CD8-positive, alpha-beta T cell (primary cell): ENCODE measurements at regions of chr4 and their contacts with region 1.

Region 1: DNA sequence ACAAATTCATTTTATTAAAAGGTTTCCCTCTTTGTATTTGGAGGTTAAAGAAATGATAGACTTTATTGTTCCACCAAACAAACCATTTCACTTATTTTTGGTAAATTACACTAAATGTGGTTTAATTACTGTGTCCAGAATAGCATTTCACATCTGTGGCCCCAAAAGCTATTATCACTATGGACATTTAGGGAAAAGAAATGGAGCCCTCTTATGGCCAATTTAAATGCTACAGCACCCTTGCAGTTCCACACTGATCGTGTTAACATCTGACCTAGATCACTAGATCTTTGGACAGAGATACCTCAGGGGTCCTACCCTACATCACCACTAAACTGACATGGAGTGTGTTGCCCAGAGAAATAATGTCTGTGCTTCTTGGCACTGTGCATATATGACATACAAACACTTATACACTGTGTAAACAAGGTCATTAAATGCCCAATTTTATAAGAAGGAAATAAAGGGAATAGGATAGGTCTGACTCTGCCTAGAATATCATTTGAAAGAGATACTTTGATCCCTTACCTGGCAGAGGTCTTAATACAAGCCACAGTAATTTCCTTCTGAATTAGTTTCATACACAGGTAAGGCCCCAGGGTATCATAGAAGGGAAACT is 163.9 kb downstream of the KDR start:
- DNase-seq: peak in 2 of 9 experiments; percentile 13 to 46
- ATAC-seq: peak; percentile 37
- H3K4me3 ChIP-seq: no peak overlapping the region
- H3K4me3 Mint-ChIP-seq: no peak overlapping the region
- H3K27ac ChIP-seq: no peak overlapping the region
- H3K27ac Mint-ChIP-seq: no peak overlapping the region
- H3K4me1 ChIP-seq: peaks cover 15% of the 10 kb centered on the region
- H3K4me1 Mint-ChIP-seq: peaks cover 24% of the 10 kb centered on the region
- H3K27me3 ChIP-seq: no peaks in the 10 kb centered on the region
- H3K27me3 Mint-ChIP-seq: no peaks in the 10 kb centered on the region
- CTCF ChIP-seq: peak; percentile 59

Region 2: GRCh38 chr4:54322818-54323417 is 638.5 kb before region 1 on chr4:
- CTCF ChIA-PET with region 1: interaction called, 4 read pairs
- POLR2A ChIA-PET with region 1: no interaction called
- intact Hi-C with region 1: loop called in 1 of 2 experiments (anchors 2 kb)
- DNase-seq: peak in 7 of 9 experiments; percentile 3 to 58 (median 42)
- ATAC-seq: peak; percentile 40
- H3K4me3 ChIP-seq: no peak overlapping the region
- H3K4me3 Mint-ChIP-seq: no peak overlapping the region
- H3K27ac ChIP-seq: no peak overlapping the region
- H3K27ac Mint-ChIP-seq: no peak overlapping the region
- H3K4me1 ChIP-seq: no peaks in the 10 kb centered on the region
- H3K4me1 Mint-ChIP-seq: no peaks in the 10 kb centered on the region
- H3K27me3 ChIP-seq: no peaks in the 10 kb centered on the region
- H3K27me3 Mint-ChIP-seq: no peaks in the 10 kb centered on the region
- CTCF ChIP-seq: peak; percentile 39

Region 3: GRCh38 chr4:54384563-54384962 is 576.9 kb before region 1 on chr4:
- CTCF ChIA-PET with region 1: interaction called, 3 read pairs
- POLR2A ChIA-PET with region 1: no interaction called
- intact Hi-C with region 1: loop called in 1 of 2 experiments (anchors 5 kb)
- DNase-seq: peak in 2 of 9 experiments; percentile 11 to 20
- ATAC-seq: no peak
- H3K4me3 ChIP-seq: no peak overlapping the region
- H3K4me3 Mint-ChIP-seq: no peak overlapping the region
- H3K27ac ChIP-seq: no peak overlapping the region
- H3K27ac Mint-ChIP-seq: no peak overlapping the region
- H3K4me1 ChIP-seq: no peaks in the 10 kb centered on the region
- H3K4me1 Mint-ChIP-seq: no peaks in the 10 kb centered on the region
- H3K27me3 ChIP-seq: no peaks in the 10 kb centered on the region
- H3K27me3 Mint-ChIP-seq: peaks cover 4% of the 10 kb centered on the region
- CTCF ChIP-seq: no peak

Region 4: DNA sequence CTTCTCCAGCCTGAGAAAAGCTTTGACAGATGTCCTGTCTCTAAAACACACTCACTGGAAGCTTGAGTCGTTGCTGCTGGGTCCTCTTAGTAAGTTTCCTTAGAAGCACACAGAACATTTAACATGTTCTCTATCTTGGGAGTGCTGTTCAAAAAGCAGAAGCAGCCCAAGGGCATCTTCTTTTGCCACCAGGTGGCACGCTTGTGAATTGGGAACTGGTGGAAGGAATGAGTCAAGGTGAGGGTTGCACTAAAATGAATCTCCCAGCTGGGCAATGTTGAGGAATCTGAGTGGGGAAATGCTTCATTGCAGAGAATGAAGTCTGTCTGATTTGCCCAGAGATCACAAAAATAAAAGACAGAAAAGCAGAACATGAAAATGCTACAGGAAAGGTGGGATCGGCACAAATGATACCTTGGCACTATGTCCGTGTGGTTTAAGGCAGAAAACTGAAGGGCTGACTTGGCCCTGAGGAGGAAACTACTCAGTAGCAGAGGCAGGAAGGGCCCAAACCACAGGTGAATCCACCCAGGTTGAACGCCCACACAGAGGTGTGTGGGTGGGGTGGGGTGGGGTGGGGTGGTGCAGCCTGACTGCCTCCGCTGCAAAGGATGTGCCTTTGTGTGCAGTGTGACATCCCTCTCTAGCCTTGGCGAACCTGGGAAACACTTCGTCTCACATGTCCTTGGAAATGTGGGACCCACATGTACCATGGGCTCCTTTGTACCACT is 277.7 kb before region 1 on chr4:
- CTCF ChIA-PET with region 1: interaction called, 36 read pairs
- POLR2A ChIA-PET with region 1: no interaction called
- intact Hi-C with region 1: loop called (anchors 1 kb)
- DNase-seq: peak in 7 of 9 experiments; percentile 24 to 64 (median 49)
- ATAC-seq: peak; percentile 65
- H3K4me3 ChIP-seq: no peak overlapping the region
- H3K4me3 Mint-ChIP-seq: peak overlapping the region; percentile 61
- H3K27ac ChIP-seq: no peak overlapping the region
- H3K27ac Mint-ChIP-seq: peak overlapping the region; percentile 85
- H3K4me1 ChIP-seq: peaks cover 14% of the 10 kb centered on the region
- H3K4me1 Mint-ChIP-seq: peaks cover 35% of the 10 kb centered on the region
- H3K27me3 ChIP-seq: no peaks in the 10 kb centered on the region
- H3K27me3 Mint-ChIP-seq: no peaks in the 10 kb centered on the region
- CTCF ChIP-seq: peak; percentile 47

Region 5: GRCh38 chr4:54902271-54902670 is 59.2 kb before region 1 on chr4:
- CTCF ChIA-PET with region 1: no interaction called
- POLR2A ChIA-PET with region 1: no interaction called
- intact Hi-C with region 1: loop called in 1 of 2 experiments (anchors 10 kb)
- DNase-seq: no peak
- ATAC-seq: no peak
- H3K4me3 ChIP-seq: no peak overlapping the region
- H3K4me3 Mint-ChIP-seq: no peak overlapping the region
- H3K27ac ChIP-seq: no peak overlapping the region
- H3K27ac Mint-ChIP-seq: no peak overlapping the region
- H3K4me1 ChIP-seq: no peaks in the 10 kb centered on the region
- H3K4me1 Mint-ChIP-seq: peaks cover 3% of the 10 kb centered on the region
- H3K27me3 ChIP-seq: no peaks in the 10 kb centered on the region
- H3K27me3 Mint-ChIP-seq: no peaks in the 10 kb centered on the region
- CTCF ChIP-seq: no peak

Region 6: DNA sequence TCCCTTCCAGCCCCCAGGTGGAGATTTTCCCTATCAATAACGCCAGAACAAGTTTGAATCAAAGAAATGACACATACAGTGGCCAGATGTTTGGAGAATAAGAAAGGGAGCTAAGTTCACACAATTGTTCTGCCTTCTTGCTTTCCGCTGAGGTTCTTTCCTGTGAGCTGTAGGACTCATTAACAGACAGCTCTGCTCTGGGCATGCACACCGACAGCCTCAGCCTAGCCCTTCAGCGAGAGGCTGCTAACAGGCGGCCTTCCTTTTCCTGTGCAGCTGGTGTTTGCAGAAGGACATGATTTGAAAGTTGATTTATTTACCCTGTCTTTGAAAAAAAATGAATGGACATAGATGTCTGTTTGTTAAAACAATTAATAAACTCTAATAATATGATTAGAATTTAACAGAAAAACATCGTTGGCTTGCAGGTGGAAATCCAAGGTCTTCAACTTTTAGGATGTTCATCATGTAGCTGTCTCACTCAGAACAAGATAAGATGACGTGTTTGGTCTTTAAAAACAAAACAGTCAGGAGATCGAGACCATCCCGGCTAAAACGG is 19.4 kb before region 1 on chr4:
- CTCF ChIA-PET with region 1: interaction called, 9 read pairs
- POLR2A ChIA-PET with region 1: interaction called, 10 read pairs
- intact Hi-C with region 1: loop called in 1 of 2 experiments (anchors 2 kb)
- DNase-seq: peak; percentile 18 to 78 (median 34)
- ATAC-seq: peak; percentile 79
- H3K4me3 ChIP-seq: peak overlapping the region in 1 of 2 experiments; percentile 12
- H3K4me3 Mint-ChIP-seq: peak overlapping the region; percentile 71
- H3K27ac ChIP-seq: peak overlapping the region; percentile 59 to 72
- H3K27ac Mint-ChIP-seq: peak overlapping the region; percentile 98
- H3K4me1 ChIP-seq: peaks cover 40% of the 10 kb centered on the region
- H3K4me1 Mint-ChIP-seq: peaks cover 56% of the 10 kb centered on the region
- H3K27me3 ChIP-seq: no peaks in the 10 kb centered on the region
- H3K27me3 Mint-ChIP-seq: no peaks in the 10 kb centered on the region
- CTCF ChIP-seq: no peak

Region 7: GRCh38 chr4:54971474-54971950 is 10.0 kb after region 1 on chr4:
- CTCF ChIA-PET with region 1: interaction called, 19 read pairs
- POLR2A ChIA-PET with region 1: no interaction called
- intact Hi-C with region 1: no loop called
- DNase-seq: peak in 2 of 9 experiments; percentile 21 to 44
- ATAC-seq: peak; percentile 51
- H3K4me3 ChIP-seq: no peak overlapping the region
- H3K4me3 Mint-ChIP-seq: no peak overlapping the region
- H3K27ac ChIP-seq: no peak overlapping the region
- H3K27ac Mint-ChIP-seq: no peak overlapping the region
- H3K4me1 ChIP-seq: no peaks in the 10 kb centered on the region
- H3K4me1 Mint-ChIP-seq: no peaks in the 10 kb centered on the region
- H3K27me3 ChIP-seq: no peaks in the 10 kb centered on the region
- H3K27me3 Mint-ChIP-seq: peaks cover 12% of the 10 kb centered on the region
- CTCF ChIP-seq: peak; percentile 63